ENCODE measurements at regions of chr3 and their contacts with region 1.

Region 1: DNA sequence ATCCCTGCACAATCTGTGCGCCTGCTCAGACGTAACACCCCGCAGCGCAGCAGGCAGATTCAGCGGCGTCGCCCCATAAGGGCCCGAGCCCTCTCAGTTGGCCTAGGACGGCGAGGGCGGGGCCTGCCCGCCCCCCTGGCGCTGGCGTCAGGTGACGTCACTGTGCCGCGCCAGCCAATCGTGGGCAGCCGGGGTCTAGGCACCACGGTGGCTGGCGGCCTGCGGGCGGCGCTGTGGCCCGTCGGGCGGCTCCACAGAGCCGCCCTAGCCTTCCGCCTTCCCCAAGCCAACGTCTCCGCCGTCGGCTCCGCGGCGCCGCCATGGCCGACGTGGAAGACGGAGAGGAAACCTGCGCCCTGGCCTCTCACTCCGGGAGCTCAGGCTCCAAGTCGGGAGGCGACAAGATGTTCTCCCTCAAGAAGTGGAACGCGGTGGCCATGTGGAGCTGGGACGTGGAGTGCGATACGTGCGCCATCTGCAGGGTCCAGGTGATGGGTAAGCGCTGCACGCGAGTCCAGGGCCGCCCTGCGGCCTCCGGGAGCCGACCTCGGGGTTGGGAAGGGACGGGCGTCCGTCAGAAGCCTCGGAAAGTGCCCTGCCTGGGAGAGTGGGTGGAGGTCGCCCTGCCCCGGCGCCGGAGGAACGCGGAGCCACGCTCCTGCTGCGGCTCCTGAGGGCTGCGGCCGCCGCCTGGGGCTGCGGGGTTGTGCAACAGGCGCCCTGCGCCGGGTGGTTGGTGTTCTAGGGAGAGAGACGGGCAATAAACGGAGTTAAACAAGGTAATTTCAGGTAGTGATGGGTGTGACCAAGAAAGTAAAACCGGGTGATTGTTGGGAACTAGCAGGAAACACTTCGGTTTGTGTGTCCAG is at the start of gene RNF7:
- DNase-seq: peak; percentile 95 to 98 (median 98)
- H3K4me3 ChIP-seq: peak within 1 kb of the TSS; percentile 62 to 91
- H3K4me3 Mint-ChIP-seq: peak within 1 kb of the TSS; percentile 98 to 100 (median 99)
- H3K27ac ChIP-seq: peak within 1 kb of the TSS; percentile 96
- H3K27ac Mint-ChIP-seq: peak within 1 kb of the TSS; percentile 96 to 100 (median 99)
- H3K4me1 ChIP-seq: peaks cover 38% of the 10 kb centered on the region
- H3K4me1 Mint-ChIP-seq: peaks cover 21 to 54% (median 38%) of the 10 kb centered on the region in 4 donors
- H3K27me3 ChIP-seq: no peaks in the 10 kb centered on the region
- H3K27me3 Mint-ChIP-seq: no peaks in the 10 kb centered on the region
- total RNA-seq, gene RNF7: 56.3 to 65.2 TPM

Region 2: DNA sequence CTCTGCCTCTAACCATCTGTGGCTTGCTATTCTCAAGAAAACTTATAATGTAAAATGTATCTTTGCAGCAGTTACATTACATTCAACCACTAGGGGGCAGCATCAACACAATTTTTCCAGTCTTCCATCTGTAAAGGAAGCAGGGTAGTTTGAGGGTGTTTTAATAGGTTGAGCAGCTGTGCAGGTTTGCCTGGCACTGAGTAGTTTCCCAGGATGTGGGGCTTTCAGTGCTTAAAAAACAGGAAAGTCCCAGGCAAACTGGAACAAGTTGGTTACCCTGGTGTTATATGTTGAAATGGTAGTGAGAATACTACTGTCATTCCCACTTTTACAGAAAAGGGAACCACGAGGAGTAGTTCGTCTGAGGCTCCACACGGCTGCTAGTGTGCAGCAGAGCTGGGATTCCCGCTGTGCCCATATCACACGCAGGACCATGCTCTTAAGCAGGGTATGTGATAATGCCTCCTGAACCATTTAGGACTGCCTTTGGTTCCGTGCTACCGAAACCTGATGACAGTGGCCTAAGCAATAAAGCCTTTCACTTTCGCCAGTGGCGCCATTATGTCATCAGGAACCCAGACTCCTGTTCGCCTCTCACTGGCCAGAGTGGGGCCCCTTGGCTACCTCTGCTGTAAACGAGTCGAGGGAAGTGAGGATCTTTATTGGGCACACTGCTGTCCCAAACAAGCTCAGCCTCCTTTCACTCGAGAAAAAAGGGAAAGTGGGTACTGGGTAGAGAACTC is 434.6 kb before region 1 on chr3:
- CTCF ChIA-PET with region 1: no interaction called
- POLR2A ChIA-PET with region 1: no interaction called
- intact Hi-C with region 1: loop called (anchors 1 kb)
- DNase-seq: peak; percentile 69 to 79 (median 76)
- H3K4me3 ChIP-seq: no peak overlapping the region
- H3K4me3 Mint-ChIP-seq: no peak overlapping the region
- H3K27ac ChIP-seq: no peak overlapping the region
- H3K27ac Mint-ChIP-seq: peak overlapping the region in 2 of 7 donors; percentile 7 to 25
- H3K4me1 ChIP-seq: peaks cover 39% of the 10 kb centered on the region
- H3K4me1 Mint-ChIP-seq: peaks cover 27 to 50% (median 45%) of the 10 kb centered on the region in 4 donors
- H3K27me3 ChIP-seq: no peaks in the 10 kb centered on the region
- H3K27me3 Mint-ChIP-seq: no peaks in the 10 kb centered on the region

Region 3: GRCh38 chr3:141477224-141477623 is 261.0 kb before region 1 on chr3:
- CTCF ChIA-PET with region 1: no interaction called
- POLR2A ChIA-PET with region 1: no interaction called
- intact Hi-C with region 1: loop called (anchors 5 kb)
- DNase-seq: no peak
- H3K4me3 ChIP-seq: no peak overlapping the region
- H3K4me3 Mint-ChIP-seq: no peak overlapping the region
- H3K27ac ChIP-seq: no peak overlapping the region
- H3K27ac Mint-ChIP-seq: peak overlapping the region in 1 of 7 donors; percentile 57
- H3K4me1 ChIP-seq: peaks cover 23% of the 10 kb centered on the region
- H3K4me1 Mint-ChIP-seq: peaks cover 13 to 38% (median 26%) of the 10 kb centered on the region in 4 donors
- H3K27me3 ChIP-seq: no peaks in the 10 kb centered on the region
- H3K27me3 Mint-ChIP-seq: no peaks in the 10 kb centered on the region

Region 4: GRCh38 chr3:141845407-141846049 is 107.3 kb after region 1 on chr3:
- CTCF ChIA-PET with region 1: interaction called, 21 read pairs
- POLR2A ChIA-PET with region 1: interaction called, 5 read pairs
- intact Hi-C with region 1: loop called (anchors 1 kb)
- DNase-seq: peak in 4 of 5 donors; percentile 10 to 19 (median 14)
- H3K4me3 ChIP-seq: no peak overlapping the region
- H3K4me3 Mint-ChIP-seq: no peak overlapping the region
- H3K27ac ChIP-seq: no peak overlapping the region
- H3K27ac Mint-ChIP-seq: no peak overlapping the region
- H3K4me1 ChIP-seq: no peaks in the 10 kb centered on the region
- H3K4me1 Mint-ChIP-seq: peaks cover 0 to 5% (median 0%) of the 10 kb centered on the region in 4 donors
- H3K27me3 ChIP-seq: no peaks in the 10 kb centered on the region
- H3K27me3 Mint-ChIP-seq: peaks cover 3 to 4% of the 10 kb centered on the region in 2 donors

Region 5: GRCh38 chr3:141913150-141913811 is 175.0 kb after region 1 on chr3:
- CTCF ChIA-PET with region 1: interaction called, 65 read pairs
- POLR2A ChIA-PET with region 1: interaction called, 14 read pairs
- intact Hi-C with region 1: loop called (anchors 1 kb)
- DNase-seq: peak; percentile 56 to 66 (median 64)
- H3K4me3 ChIP-seq: no peak overlapping the region
- H3K4me3 Mint-ChIP-seq: no peak overlapping the region
- H3K27ac ChIP-seq: no peak overlapping the region
- H3K27ac Mint-ChIP-seq: peak overlapping the region in 5 of 7 donors; percentile 3 to 85 (median 52)
- H3K4me1 ChIP-seq: no peaks in the 10 kb centered on the region
- H3K4me1 Mint-ChIP-seq: peaks cover 0 to 10% (median 3%) of the 10 kb centered on the region in 4 donors
- H3K27me3 ChIP-seq: no peaks in the 10 kb centered on the region
- H3K27me3 Mint-ChIP-seq: no peaks in the 10 kb centered on the region

Region 6: GRCh38 chr3:141972399-141972798 is 234.1 kb after region 1 on chr3:
- CTCF ChIA-PET with region 1: no interaction called
- POLR2A ChIA-PET with region 1: no interaction called
- intact Hi-C with region 1: no loop called
- DNase-seq: no peak
- H3K4me3 ChIP-seq: no peak overlapping the region
- H3K4me3 Mint-ChIP-seq: no peak overlapping the region
- H3K27ac ChIP-seq: no peak overlapping the region
- H3K27ac Mint-ChIP-seq: peak overlapping the region in 1 of 7 donors; percentile 6
- H3K4me1 ChIP-seq: no peaks in the 10 kb centered on the region
- H3K4me1 Mint-ChIP-seq: no peaks in the 10 kb centered on the region
- H3K27me3 ChIP-seq: no peaks in the 10 kb centered on the region
- H3K27me3 Mint-ChIP-seq: no peaks in the 10 kb centered on the region

Region 7: GRCh38 chr3:142226484-142226883 is 488.2 kb after region 1 on chr3:
- CTCF ChIA-PET with region 1: no interaction called
- POLR2A ChIA-PET with region 1: no interaction called
- intact Hi-C with region 1: loop called (anchors 1 kb)
- DNase-seq: no peak
- H3K4me3 ChIP-seq: no peak overlapping the region
- H3K4me3 Mint-ChIP-seq: peak overlapping the region; percentile 34 to 93 (median 62)
- H3K27ac ChIP-seq: no peak overlapping the region
- H3K27ac Mint-ChIP-seq: peak overlapping the region in 1 of 7 donors; percentile 81
- H3K4me1 ChIP-seq: peaks cover 12% of the 10 kb centered on the region
- H3K4me1 Mint-ChIP-seq: peaks cover 8 to 18% (median 12%) of the 10 kb centered on the region in 4 donors
- H3K27me3 ChIP-seq: no peaks in the 10 kb centered on the region
- H3K27me3 Mint-ChIP-seq: no peaks in the 10 kb centered on the region

Region 8: DNA sequence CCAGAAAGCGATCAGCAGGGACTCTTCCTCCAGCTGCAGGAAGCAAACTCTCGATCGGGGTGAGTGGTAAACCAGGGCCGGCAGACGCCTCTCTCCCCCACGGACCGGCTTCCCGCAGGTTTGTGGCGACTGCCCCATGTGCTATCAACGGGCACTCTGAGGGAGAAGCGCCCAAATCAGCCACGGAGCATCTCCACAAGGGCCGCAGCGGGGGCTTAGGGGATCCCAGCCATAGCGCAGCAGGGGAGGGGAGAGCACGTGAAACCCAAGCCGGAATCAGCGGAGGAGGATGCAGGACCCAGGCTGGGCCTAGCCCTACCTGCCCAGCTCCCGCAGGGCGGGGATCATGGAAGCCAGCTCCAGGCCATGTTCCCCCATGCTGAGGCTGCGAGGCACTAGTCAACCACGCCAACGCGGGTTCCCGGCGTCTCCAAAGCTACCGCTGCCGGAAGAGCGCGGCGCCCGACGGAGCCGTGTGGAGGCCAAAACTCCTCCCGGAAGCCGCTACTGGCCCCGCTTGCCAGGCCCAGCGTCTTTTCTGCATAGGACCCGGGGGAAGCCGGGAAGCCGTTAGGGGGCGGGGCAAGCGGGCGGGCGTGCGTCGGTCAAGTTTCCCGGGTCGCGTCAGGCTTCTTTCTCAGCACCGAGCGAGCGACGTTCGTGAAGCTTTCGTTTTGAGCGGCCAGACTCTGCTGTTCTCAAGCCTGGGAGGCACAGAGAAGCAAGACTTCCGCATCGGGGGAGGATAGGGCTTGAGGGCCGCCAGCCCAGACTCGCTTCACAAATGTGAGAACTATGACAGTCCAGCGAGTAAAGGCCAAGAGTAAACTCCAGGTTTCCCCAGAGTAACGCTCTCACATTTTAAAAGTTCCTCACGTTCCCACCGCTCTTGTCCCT is 840.3 kb after region 1 on chr3 and contains the start of gene ATR:
- CTCF ChIA-PET with region 1: no interaction called
- POLR2A ChIA-PET with region 1: no interaction called
- intact Hi-C with region 1: loop called (anchors 10 kb)
- DNase-seq: peak; percentile 95 to 96 (median 96)
- H3K4me3 ChIP-seq: peak within 1 kb of the TSS; percentile 90 to 100
- H3K4me3 Mint-ChIP-seq: peak within 1 kb of the TSS; percentile 93 to 99 (median 98)
- H3K27ac ChIP-seq: peak within 1 kb of the TSS; percentile 94
- H3K27ac Mint-ChIP-seq: peak within 1 kb of the TSS; percentile 91 to 99 (median 99)
- H3K4me1 ChIP-seq: peaks cover 44% of the 10 kb centered on the region
- H3K4me1 Mint-ChIP-seq: peaks cover 41 to 66% (median 52%) of the 10 kb centered on the region in 4 donors
- H3K27me3 ChIP-seq: no peaks in the 10 kb centered on the region
- H3K27me3 Mint-ChIP-seq: peaks cover 2 to 4% of the 10 kb centered on the region in 2 donors
- total RNA-seq, gene ATR: 42.3 to 45.6 TPM